ENCODE measurements at regions of chr5 and their contacts with region 1.

Region 1: GRCh38 chr5:175464074-175464941 is 14.1 kb upstream of the SFXN1 start:
- DNase-seq: peak; percentile 85
- ATAC-seq: peak; percentile 98
- H3K4me3 Mint-ChIP-seq: no peak overlapping the region
- H3K27ac Mint-ChIP-seq: peak overlapping the region; percentile 53
- H3K4me1 Mint-ChIP-seq: peaks cover 24% of the 10 kb centered on the region
- H3K27me3 Mint-ChIP-seq: no peaks in the 10 kb centered on the region
- CTCF ChIP-seq: peak; percentile 84

Region 2: GRCh38 chr5:175444060-175444904 is 20.0 kb before region 1 on chr5 and contains the start of gene DRD1:
- CTCF ChIA-PET with region 1: interaction called, 11 read pairs
- POLR2A ChIA-PET with region 1: no interaction called
- intact Hi-C with region 1: no loop called
- DNase-seq: peak; percentile 40
- ATAC-seq: peak; percentile 80
- H3K4me3 Mint-ChIP-seq: peak within 1 kb of the TSS; percentile 42
- H3K27ac Mint-ChIP-seq: no peak within 1 kb of the TSS
- H3K4me1 Mint-ChIP-seq: peaks cover 5% of the 10 kb centered on the region
- H3K27me3 Mint-ChIP-seq: peaks cover 57% of the 10 kb centered on the region
- CTCF ChIP-seq: peak; percentile 95
- total RNA-seq, gene DRD1: not detected

Region 3: GRCh38 chr5:175452166-175452565 is 12.1 kb before region 1 on chr5:
- CTCF ChIA-PET with region 1: interaction called, 14 read pairs
- POLR2A ChIA-PET with region 1: no interaction called
- intact Hi-C with region 1: no loop called
- DNase-seq: no peak
- ATAC-seq: no peak
- H3K4me3 Mint-ChIP-seq: no peak overlapping the region
- H3K27ac Mint-ChIP-seq: no peak overlapping the region
- H3K4me1 Mint-ChIP-seq: peaks cover 2% of the 10 kb centered on the region
- H3K27me3 Mint-ChIP-seq: peaks cover 22% of the 10 kb centered on the region
- CTCF ChIP-seq: no peak